Mammary epithelial cell (primary cell): ENCODE measurements at regions of chr10 and their contacts with region 1.

Region 1: GRCh38 chr10:92103376-92104090 is 180.0 kb downstream of the BTAF1 start:
- DNase-seq: no peak
- H3K4me3 ChIP-seq: no peak overlapping the region
- H3K27ac ChIP-seq: no peak overlapping the region
- H3K4me1 ChIP-seq: peaks cover 10% of the 10 kb centered on the region
- H3K27me3 ChIP-seq: no peaks in the 10 kb centered on the region
- CTCF ChIP-seq: no peak

Region 2: GRCh38 chr10:92200564-92200963 is 97.0 kb after region 1 on chr10:
- CTCF ChIA-PET with region 1: no interaction called
- dilution Hi-C with region 1: no loop called
- in situ Hi-C with region 1: no loop called
- intact Hi-C with region 1: loop called (anchors 5 kb)
- DNase-seq: peak; percentile 90
- H3K4me3 ChIP-seq: no peak overlapping the region
- H3K27ac ChIP-seq: no peak overlapping the region
- H3K4me1 ChIP-seq: peaks cover 5% of the 10 kb centered on the region
- H3K27me3 ChIP-seq: no peaks in the 10 kb centered on the region
- CTCF ChIP-seq: no peak

Region 3: DNA sequence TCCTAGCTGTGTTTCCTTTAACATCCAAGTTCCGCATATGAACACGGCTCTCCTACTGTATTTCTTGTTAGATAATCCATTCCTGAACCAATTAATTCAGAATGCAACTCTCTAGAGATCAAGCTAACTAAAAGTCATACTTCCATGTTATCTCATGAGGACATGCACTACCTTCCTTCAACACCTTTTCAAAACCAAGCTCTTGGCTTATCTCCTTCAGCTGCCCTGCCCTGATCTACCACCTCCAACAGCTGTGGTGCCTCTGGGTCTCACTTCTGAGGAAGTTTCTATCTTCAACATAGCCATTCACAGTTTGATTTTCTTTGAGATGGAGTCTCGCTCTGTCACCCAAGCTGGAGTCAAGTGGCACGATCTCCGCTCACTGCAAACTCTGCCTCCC is 360.8 kb after region 1 on chr10:
- CTCF ChIA-PET with region 1: interaction called, 18 read pairs
- dilution Hi-C with region 1: no loop called
- in situ Hi-C with region 1: no loop called
- intact Hi-C with region 1: no loop called
- DNase-seq: no peak
- H3K4me3 ChIP-seq: no peak overlapping the region
- H3K27ac ChIP-seq: no peak overlapping the region
- H3K4me1 ChIP-seq: no peaks in the 10 kb centered on the region
- H3K27me3 ChIP-seq: no peaks in the 10 kb centered on the region
- CTCF ChIP-seq: no peak